Gastrocnemius medialis (tissue), 4 donors: ENCODE measurements at regions of chr1 and their contacts with region 1.

Region 1: GRCh38 chr1:201895913-201896807 is 7.5 kb downstream of the SHISA4 start:
- DNase-seq: peak; percentile 76 to 89
- ATAC-seq: peak; percentile 85 to 86
- H3K4me3 ChIP-seq: no peak overlapping the region
- H3K27ac ChIP-seq: peak overlapping the region; percentile 90 to 98 (median 94)
- H3K4me1 ChIP-seq: peaks cover 24 to 33% of the 10 kb centered on the region in 2 donors
- H3K27me3 ChIP-seq: no peaks in the 10 kb centered on the region
- CTCF ChIP-seq: peak; percentile 90 to 98 (median 96)
- POLR2A ChIP-seq: no peak

Region 2: DNA sequence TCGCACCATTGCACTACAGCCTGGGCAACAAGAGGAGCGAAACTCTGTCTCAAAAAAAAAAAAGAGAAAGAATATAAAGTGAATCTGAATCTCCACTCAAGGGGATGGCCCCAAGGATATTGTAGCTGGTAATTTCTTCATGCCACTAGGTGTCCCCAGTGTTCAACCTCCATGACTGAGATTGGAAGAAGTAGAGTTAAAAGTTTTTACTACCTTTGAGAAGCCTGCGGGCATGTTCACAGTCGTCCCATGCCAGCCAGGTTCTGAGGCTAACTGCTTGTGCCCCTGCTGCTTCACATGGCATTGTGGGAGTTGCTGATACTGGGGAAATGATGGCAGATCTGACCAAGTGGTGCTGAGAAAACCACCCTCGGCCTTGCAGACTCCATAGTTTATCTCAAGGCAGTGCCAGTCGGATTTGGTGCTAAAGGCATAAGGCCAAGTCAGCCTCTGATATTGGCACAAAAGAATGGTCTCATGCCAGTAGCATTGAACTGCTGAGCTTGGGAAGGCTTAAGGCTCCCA is 18.2 kb before region 1 on chr1:
- in situ Hi-C with region 1: no loop called
- intact Hi-C with region 1: loop called (anchors 1 kb)
- DNase-seq: peak in 1 of 2 donors; percentile 70
- ATAC-seq: peak; percentile 58 to 74
- H3K4me3 ChIP-seq: no peak overlapping the region
- H3K27ac ChIP-seq: peak overlapping the region; percentile 78 to 90 (median 84)
- H3K4me1 ChIP-seq: peaks cover 38 to 52% of the 10 kb centered on the region in 2 donors
- H3K27me3 ChIP-seq: no peaks in the 10 kb centered on the region
- CTCF ChIP-seq: peak; percentile 48 to 79 (median 65)
- POLR2A ChIP-seq: no peak

Region 3: GRCh38 chr1:201946224-201946908 is 50.2 kb after region 1 on chr1 and contains the start of gene LMOD1:
- in situ Hi-C with region 1: no loop called
- intact Hi-C with region 1: loop called (anchors 2 kb)
- DNase-seq: peak; percentile 79 to 84
- ATAC-seq: peak; percentile 73 to 76
- H3K4me3 ChIP-seq: peak within 1 kb of the TSS; percentile 57 to 74 (median 62)
- H3K27ac ChIP-seq: peak within 1 kb of the TSS; percentile 82 to 84 (median 84)
- H3K4me1 ChIP-seq: peaks cover 29 to 32% of the 10 kb centered on the region in 2 donors
- H3K27me3 ChIP-seq: no peaks in the 10 kb centered on the region
- CTCF ChIP-seq: no peak
- POLR2A ChIP-seq: peak; percentile 56 to 59
- total RNA-seq, gene LMOD1: 12.8 to 39.5 (median 22.6) TPM

Region 4: GRCh38 chr1:201970334-201971159 is 74.4 kb after region 1 on chr1:
- in situ Hi-C with region 1: loop called (anchors 5 kb)
- intact Hi-C with region 1: loop called (anchors 1 kb)
- DNase-seq: no peak
- ATAC-seq: no peak
- H3K4me3 ChIP-seq: no peak overlapping the region
- H3K27ac ChIP-seq: no peak overlapping the region
- H3K4me1 ChIP-seq: peaks cover 7% of the 10 kb centered on the region in 2 donors
- H3K27me3 ChIP-seq: no peaks in the 10 kb centered on the region
- CTCF ChIP-seq: no peak
- POLR2A ChIP-seq: no peak

Region 5: GRCh38 chr1:202135221-202135721 is 239.1 kb after region 1 on chr1:
- in situ Hi-C with region 1: loop called in 3 of 4 experiments (anchors 25 kb)
- intact Hi-C with region 1: no loop called
- DNase-seq: peak in 1 of 2 donors; percentile 40
- ATAC-seq: peak; percentile 74 to 78
- H3K4me3 ChIP-seq: no peak overlapping the region
- H3K27ac ChIP-seq: no peak overlapping the region
- H3K4me1 ChIP-seq: peaks cover 5 to 14% of the 10 kb centered on the region in 2 donors
- H3K27me3 ChIP-seq: no peaks in the 10 kb centered on the region
- CTCF ChIP-seq: peak; percentile 49 to 93 (median 74)
- POLR2A ChIP-seq: no peak

Region 6: GRCh38 chr1:202531472-202531811 is 635.3 kb after region 1 on chr1:
- in situ Hi-C with region 1: no loop called
- intact Hi-C with region 1: no loop called
- DNase-seq: no peak
- ATAC-seq: no peak
- H3K4me3 ChIP-seq: no peak overlapping the region
- H3K27ac ChIP-seq: peak overlapping the region in 2 of 4 donors; percentile 24 to 57
- H3K4me1 ChIP-seq: peaks cover 10 to 16% of the 10 kb centered on the region in 2 donors
- H3K27me3 ChIP-seq: no peaks in the 10 kb centered on the region
- CTCF ChIP-seq: no peak
- POLR2A ChIP-seq: no peak